Mammary epithelial cell (primary cell): ENCODE measurements at regions of chr3 and their contacts with region 1.

Region 1: DNA sequence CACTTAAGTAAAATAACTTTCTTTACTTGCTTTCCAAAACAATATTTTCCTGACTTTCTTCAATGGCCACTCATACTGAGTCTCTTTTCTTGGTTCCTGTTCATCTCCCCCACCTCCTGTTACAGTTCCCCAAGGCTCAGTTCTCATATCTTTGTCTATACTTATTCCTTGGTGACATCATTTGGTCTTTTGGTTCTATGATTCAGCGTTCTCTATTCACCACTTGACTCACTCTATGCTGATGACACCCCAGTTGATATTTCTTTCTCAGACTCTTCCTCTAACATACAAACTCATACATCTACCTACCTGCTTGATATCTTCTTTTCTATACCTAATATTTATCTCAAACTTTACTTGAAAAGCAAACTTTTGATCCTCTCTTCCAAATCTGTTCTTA is 85.0 kb upstream of the P3H2 start:
- DNase-seq: peak; percentile 85
- H3K4me3 ChIP-seq: no peak overlapping the region
- H3K27ac ChIP-seq: peak overlapping the region; percentile 31
- H3K4me1 ChIP-seq: peaks cover 4% of the 10 kb centered on the region
- H3K27me3 ChIP-seq: no peaks in the 10 kb centered on the region
- CTCF ChIP-seq: no peak

Region 2: DNA sequence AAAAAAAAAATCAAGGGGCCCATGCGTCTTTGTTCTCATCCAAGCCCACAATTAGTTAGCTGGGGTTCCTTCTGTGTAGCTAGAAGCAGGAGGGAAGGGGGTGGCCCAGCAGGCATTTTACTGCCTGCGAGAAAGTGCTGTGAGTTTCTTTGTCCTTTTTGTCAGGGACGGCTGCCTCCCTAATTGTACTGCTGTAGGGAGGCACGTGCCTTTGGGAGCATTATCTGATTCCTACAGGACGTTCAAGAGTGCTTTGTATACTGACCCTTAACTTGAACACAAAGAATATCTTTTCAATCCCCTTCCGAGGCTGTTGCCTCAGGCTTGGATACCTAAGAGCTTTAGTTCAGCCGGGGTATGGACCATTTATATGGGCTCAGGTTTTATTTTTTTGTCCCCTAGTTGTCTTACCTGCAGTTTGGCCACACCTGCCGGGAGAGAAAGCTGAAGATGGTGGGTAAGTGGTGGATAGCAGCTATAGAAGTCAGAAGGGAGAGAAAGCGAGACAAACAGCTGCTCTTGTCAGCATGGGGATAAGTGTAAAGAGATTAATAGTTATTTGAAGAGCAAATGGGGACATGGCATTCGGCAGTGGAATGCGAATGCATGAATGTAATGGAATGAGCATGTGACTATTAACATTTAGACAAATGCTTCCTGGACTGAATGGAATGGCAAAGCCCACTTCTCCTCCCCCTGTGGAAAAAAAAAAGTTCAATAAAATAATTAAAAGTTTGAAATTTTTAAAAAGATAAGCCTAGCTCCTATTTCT is 399.4 kb before region 1 on chr3:
- CTCF ChIA-PET with region 1: no interaction called
- dilution Hi-C with region 1: no loop called
- in situ Hi-C with region 1: no loop called
- intact Hi-C with region 1: no loop called
- DNase-seq: no peak
- H3K4me3 ChIP-seq: no peak overlapping the region
- H3K27ac ChIP-seq: no peak overlapping the region
- H3K4me1 ChIP-seq: peaks cover 11% of the 10 kb centered on the region
- H3K27me3 ChIP-seq: no peaks in the 10 kb centered on the region
- CTCF ChIP-seq: no peak

Region 3: DNA sequence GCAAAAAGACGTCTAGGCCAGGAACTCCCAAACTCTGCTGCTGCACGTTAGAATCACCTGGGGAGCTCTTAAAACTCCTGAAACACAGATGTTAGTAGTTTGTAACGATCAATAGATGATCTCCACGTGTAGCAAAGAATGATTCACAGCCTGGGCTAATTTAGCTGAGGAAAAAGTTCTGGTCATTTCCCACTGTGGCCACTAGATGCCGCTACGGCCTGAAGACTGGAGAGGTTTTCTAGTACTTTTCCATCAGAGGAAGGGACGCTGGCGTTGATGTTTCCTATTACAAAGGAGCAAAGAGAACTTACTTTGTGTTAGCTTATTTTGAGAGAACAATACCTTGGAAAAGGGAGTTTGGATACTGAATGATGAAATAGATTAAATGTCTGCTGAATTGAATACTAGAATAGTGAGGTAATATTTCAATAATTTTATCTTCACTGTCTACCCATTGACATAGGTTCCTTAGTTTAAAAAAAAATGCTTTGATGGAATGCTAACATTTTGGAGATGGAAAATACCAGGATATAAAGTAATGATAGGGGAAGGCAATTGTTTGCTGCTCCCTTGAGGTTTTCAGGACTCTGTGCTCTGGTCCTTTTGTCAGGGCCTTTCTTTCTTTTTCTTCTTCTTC is 244.1 kb before region 1 on chr3:
- CTCF ChIA-PET with region 1: no interaction called
- dilution Hi-C with region 1: no loop called
- in situ Hi-C with region 1: loop called in 1 of 2 experiments (anchors 10 kb)
- intact Hi-C with region 1: loop called (anchors 1 kb)
- DNase-seq: peak; percentile 82
- H3K4me3 ChIP-seq: no peak overlapping the region
- H3K27ac ChIP-seq: peak overlapping the region; percentile 2
- H3K4me1 ChIP-seq: peaks cover 18% of the 10 kb centered on the region
- H3K27me3 ChIP-seq: no peaks in the 10 kb centered on the region
- CTCF ChIP-seq: peak; percentile 90 to 97

Region 4: GRCh38 chr3:189967254-189967865 is 238.4 kb before region 1 on chr3:
- CTCF ChIA-PET with region 1: no interaction called
- dilution Hi-C with region 1: no loop called
- in situ Hi-C with region 1: loop called in 1 of 2 experiments (anchors 10 kb)
- intact Hi-C with region 1: loop called (anchors 1 kb)
- DNase-seq: peak; percentile 41
- H3K4me3 ChIP-seq: no peak overlapping the region
- H3K27ac ChIP-seq: no peak overlapping the region
- H3K4me1 ChIP-seq: peaks cover 6% of the 10 kb centered on the region
- H3K27me3 ChIP-seq: no peaks in the 10 kb centered on the region
- CTCF ChIP-seq: peak; percentile 69 to 90

Region 5: DNA sequence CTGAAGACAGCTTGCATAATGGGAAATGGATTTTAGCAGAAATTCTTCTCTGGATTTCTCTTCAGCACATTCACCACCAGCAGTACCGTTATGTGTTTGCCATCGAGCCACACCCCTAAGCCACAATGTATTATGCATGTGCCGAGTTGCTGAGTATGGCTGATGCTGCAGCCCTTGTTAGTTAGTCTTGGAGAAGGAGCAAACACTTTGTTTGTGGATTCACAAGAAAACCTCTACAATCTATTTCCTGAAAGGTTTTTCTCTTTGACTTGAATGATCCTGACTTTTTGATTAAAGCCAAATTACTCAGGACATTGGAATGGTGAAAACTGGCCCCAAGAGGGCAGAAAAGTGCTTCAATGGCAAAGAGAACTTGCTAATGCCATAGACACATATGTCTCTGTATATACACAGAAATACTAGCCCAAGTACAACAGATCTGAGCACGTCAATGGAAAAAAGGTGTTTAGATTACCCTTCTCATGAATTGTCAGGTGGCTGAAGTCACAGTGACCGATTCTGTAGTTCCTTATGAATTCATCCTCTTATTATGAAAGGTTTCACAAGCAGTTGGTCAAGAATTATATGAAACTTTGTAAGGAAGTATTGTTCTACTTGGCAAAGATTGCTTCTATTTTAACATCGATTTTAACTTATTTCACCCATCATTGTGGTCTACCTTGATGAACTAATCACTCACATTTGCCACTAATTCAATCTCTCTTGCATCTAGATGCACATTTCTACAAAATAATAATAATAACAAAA is 188.0 kb before region 1 on chr3:
- CTCF ChIA-PET with region 1: no interaction called
- dilution Hi-C with region 1: no loop called
- in situ Hi-C with region 1: no loop called
- intact Hi-C with region 1: loop called (anchors 1 kb)
- DNase-seq: peak; percentile 70
- H3K4me3 ChIP-seq: no peak overlapping the region
- H3K27ac ChIP-seq: peak overlapping the region; percentile 19
- H3K4me1 ChIP-seq: peaks cover 42% of the 10 kb centered on the region
- H3K27me3 ChIP-seq: no peaks in the 10 kb centered on the region
- CTCF ChIP-seq: peak; percentile 41 to 53

Region 6: GRCh38 chr3:190060192-190060775 is 145.5 kb before region 1 on chr3:
- CTCF ChIA-PET with region 1: interaction called, 12 read pairs
- dilution Hi-C with region 1: no loop called
- in situ Hi-C with region 1: no loop called
- intact Hi-C with region 1: no loop called
- DNase-seq: no peak
- H3K4me3 ChIP-seq: no peak overlapping the region
- H3K27ac ChIP-seq: no peak overlapping the region
- H3K4me1 ChIP-seq: peaks cover 10% of the 10 kb centered on the region
- H3K27me3 ChIP-seq: no peaks in the 10 kb centered on the region
- CTCF ChIP-seq: no peak

Region 7: GRCh38 chr3:190155752-190156151 is 50.0 kb before region 1 on chr3:
- CTCF ChIA-PET with region 1: no interaction called
- dilution Hi-C with region 1: no loop called
- in situ Hi-C with region 1: no loop called
- intact Hi-C with region 1: no loop called
- DNase-seq: peak; percentile 99
- H3K4me3 ChIP-seq: no peak overlapping the region
- H3K27ac ChIP-seq: peak overlapping the region; percentile 96
- H3K4me1 ChIP-seq: peaks cover 22% of the 10 kb centered on the region
- H3K27me3 ChIP-seq: no peaks in the 10 kb centered on the region
- CTCF ChIP-seq: no peak

Region 8: GRCh38 chr3:190229632-190230416 is 24.1 kb after region 1 on chr3:
- CTCF ChIA-PET with region 1: no interaction called
- dilution Hi-C with region 1: no loop called
- in situ Hi-C with region 1: no loop called
- intact Hi-C with region 1: no loop called
- DNase-seq: peak; percentile 95
- H3K4me3 ChIP-seq: peak overlapping the region in 2 of 3 experiments; percentile 22 to 33
- H3K27ac ChIP-seq: peak overlapping the region; percentile 94
- H3K4me1 ChIP-seq: peaks cover 31% of the 10 kb centered on the region
- H3K27me3 ChIP-seq: no peaks in the 10 kb centered on the region
- CTCF ChIP-seq: no peak

Region 9: GRCh38 chr3:190424478-190425439 is 219.0 kb after region 1 on chr3:
- CTCF ChIA-PET with region 1: no interaction called
- dilution Hi-C with region 1: no loop called
- in situ Hi-C with region 1: loop called in 1 of 2 experiments (anchors 25 kb)
- intact Hi-C with region 1: loop called (anchors 5 kb)
- DNase-seq: peak; percentile 73
- H3K4me3 ChIP-seq: no peak overlapping the region
- H3K27ac ChIP-seq: no peak overlapping the region
- H3K4me1 ChIP-seq: peaks cover 5% of the 10 kb centered on the region
- H3K27me3 ChIP-seq: no peaks in the 10 kb centered on the region
- CTCF ChIP-seq: peak; percentile 44 to 64